ENCODE measurements at regions of chr1 and their contacts with region 1.

Region 1: DNA sequence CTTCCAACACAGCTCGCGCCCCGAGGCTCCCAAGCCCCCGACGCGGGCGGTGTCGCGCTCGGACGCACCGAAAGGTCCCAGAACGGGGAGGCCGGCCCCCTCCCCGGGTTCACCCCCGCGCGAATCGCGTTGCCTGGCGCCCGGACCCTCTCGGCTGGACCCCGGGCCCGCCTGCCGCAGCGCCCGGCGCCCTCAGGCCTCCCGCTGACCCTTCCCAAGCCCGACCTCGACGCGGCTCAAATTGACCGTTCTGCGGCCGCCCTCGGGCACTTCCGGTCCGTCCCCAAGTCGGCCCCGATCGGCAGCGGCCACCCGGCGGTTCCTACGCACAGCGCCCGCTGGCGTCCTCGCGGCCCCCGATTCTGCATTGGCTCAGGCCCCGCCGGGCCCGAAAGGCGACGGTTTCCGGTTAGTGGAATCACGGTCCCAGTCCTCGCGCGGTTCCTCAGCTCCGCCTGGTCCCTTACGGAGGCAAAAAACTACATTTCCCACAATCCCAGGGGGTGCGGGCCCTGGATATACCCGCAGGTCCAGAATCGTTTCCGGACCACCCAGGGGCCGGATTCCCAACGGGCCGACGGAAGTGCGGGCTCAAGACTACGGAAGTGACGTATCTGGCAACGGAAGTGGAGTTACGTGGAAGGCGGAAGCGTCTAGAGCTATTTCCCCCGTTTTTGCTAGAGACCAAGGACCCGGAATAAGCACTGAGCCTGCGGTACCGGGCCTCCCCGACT is at the start of gene AURKAIP1:
- DNase-seq: peak; percentile 88 to 100 (median 93)
- ATAC-seq: peak; percentile 66
- H3K4me3 ChIP-seq: peak within 1 kb of the TSS; percentile 84
- H3K4me3 Mint-ChIP-seq: peak within 1 kb of the TSS; percentile 99
- H3K27ac ChIP-seq: peak within 1 kb of the TSS; percentile 87 to 89
- H3K27ac Mint-ChIP-seq: peak within 1 kb of the TSS; percentile 91
- H3K4me1 ChIP-seq: peaks cover 54% of the 10 kb centered on the region
- H3K4me1 Mint-ChIP-seq: peaks cover 38% of the 10 kb centered on the region
- H3K27me3 ChIP-seq: no peaks in the 10 kb centered on the region
- H3K27me3 Mint-ChIP-seq: no peaks in the 10 kb centered on the region
- CTCF ChIP-seq: no peak
- total RNA-seq, gene AURKAIP1: 59.2 to 64.6 TPM

Region 2: GRCh38 chr1:1122078-1122811 is 252.9 kb before region 1 on chr1:
- CTCF ChIA-PET with region 1: interaction called, 4 read pairs
- POLR2A ChIA-PET with region 1: interaction called, 4 read pairs
- intact Hi-C with region 1: loop called in 1 of 2 experiments (anchors 1 kb)
- DNase-seq: peak; percentile 71 to 90 (median 82)
- ATAC-seq: peak; percentile 99
- H3K4me3 ChIP-seq: peak overlapping the region; percentile 48
- H3K4me3 Mint-ChIP-seq: no peak overlapping the region
- H3K27ac ChIP-seq: no peak overlapping the region
- H3K27ac Mint-ChIP-seq: no peak overlapping the region
- H3K4me1 ChIP-seq: peaks cover 20% of the 10 kb centered on the region
- H3K4me1 Mint-ChIP-seq: no peaks in the 10 kb centered on the region
- H3K27me3 ChIP-seq: peaks cover 0 to 2% of the 10 kb centered on the region in 2 experiments
- H3K27me3 Mint-ChIP-seq: no peaks in the 10 kb centered on the region
- CTCF ChIP-seq: peak; percentile 91

Region 3: DNA sequence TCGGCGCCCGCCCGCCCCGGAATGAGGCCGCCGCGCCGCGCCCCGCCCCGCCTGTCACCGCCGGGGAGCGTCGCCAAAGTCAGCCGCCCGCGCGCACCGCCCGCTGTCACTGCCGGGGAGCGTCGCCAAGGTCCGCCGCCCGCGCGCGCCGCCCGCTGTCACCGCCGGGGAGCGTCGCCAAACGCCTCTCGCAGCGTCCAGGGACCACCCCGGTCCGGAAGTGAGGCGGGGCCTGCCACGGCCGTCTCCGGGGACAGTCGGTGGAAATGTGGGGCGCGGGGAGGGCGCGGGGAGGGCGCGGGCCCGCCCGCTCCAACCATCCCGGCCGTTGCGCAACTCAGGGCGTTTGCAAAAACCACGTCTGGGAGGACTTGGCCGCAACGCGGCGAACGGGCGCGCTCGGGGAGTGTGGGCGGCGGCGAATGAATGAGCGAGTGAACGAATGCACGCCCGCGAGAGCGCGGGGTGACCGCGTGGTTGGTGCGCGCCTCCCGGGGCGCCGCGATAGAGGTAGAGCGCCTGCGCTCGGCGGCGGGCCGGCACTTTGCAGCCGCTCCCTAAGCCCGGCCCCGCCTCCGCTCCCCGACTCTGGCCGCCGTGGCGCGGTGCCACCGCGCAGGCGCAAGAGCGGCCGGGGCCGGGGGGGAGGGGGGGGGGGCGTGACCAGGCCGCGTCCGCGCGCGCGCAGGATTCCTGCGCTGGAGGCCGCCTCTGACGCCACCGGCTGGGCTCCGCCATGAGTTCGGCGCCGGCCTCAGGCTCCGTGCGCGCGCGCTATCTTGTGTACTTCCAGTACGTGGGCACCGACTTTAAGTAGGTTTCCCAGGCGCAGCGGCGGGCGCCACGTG is 67.0 kb before region 1 on chr1 and contains the starts of genes ACAP3 and PUSL1:
- CTCF ChIA-PET with region 1: no interaction called
- POLR2A ChIA-PET with region 1: interaction called, 5 read pairs
- intact Hi-C with region 1: loop called (anchors 1 to 10 kb)
- DNase-seq: peak; percentile 77 to 96 (median 86)
- ATAC-seq: peak; percentile 74
- H3K4me3 ChIP-seq: peak within 1 kb of the TSS; percentile 70
- H3K4me3 Mint-ChIP-seq: peak within 1 kb of the TSS; percentile 93
- H3K27ac ChIP-seq: peak within 1 kb of the TSS; percentile 76 to 88
- H3K27ac Mint-ChIP-seq: peak within 1 kb of the TSS; percentile 87
- H3K4me1 ChIP-seq: peaks cover 46% of the 10 kb centered on the region
- H3K4me1 Mint-ChIP-seq: peaks cover 25% of the 10 kb centered on the region
- H3K27me3 ChIP-seq: no peaks in the 10 kb centered on the region
- H3K27me3 Mint-ChIP-seq: no peaks in the 10 kb centered on the region
- CTCF ChIP-seq: no peak
- total RNA-seq, gene ACAP3: 45.3 to 46.4 TPM
- total RNA-seq, gene PUSL1: 18.1 to 19.2 TPM

Region 4: GRCh38 chr1:1355416-1355815 is 19.7 kb before region 1 on chr1:
- CTCF ChIA-PET with region 1: interaction called, 9 read pairs
- POLR2A ChIA-PET with region 1: interaction called, 12 read pairs
- intact Hi-C with region 1: loop called in 1 of 2 experiments (anchors 2 kb)
- DNase-seq: no peak
- ATAC-seq: no peak
- H3K4me3 ChIP-seq: no peak overlapping the region
- H3K4me3 Mint-ChIP-seq: no peak overlapping the region
- H3K27ac ChIP-seq: no peak overlapping the region
- H3K27ac Mint-ChIP-seq: no peak overlapping the region
- H3K4me1 ChIP-seq: peaks cover 54% of the 10 kb centered on the region
- H3K4me1 Mint-ChIP-seq: peaks cover 28% of the 10 kb centered on the region
- H3K27me3 ChIP-seq: peaks cover 37 to 50% of the 10 kb centered on the region in 2 experiments
- H3K27me3 Mint-ChIP-seq: peaks cover 41% of the 10 kb centered on the region
- CTCF ChIP-seq: no peak

Region 5: GRCh38 chr1:1406817-1407635 is 31.9 kb after region 1 on chr1 and contains the start of gene MRPL20:
- CTCF ChIA-PET with region 1: interaction called, 7 read pairs
- POLR2A ChIA-PET with region 1: interaction called, 39 read pairs
- intact Hi-C with region 1: loop called (anchors 1 to 2 kb)
- DNase-seq: peak; percentile 93 to 99 (median 95)
- ATAC-seq: peak; percentile 94
- H3K4me3 ChIP-seq: peak within 1 kb of the TSS; percentile 92
- H3K4me3 Mint-ChIP-seq: peak within 1 kb of the TSS; percentile 94
- H3K27ac ChIP-seq: peak within 1 kb of the TSS; percentile 80 to 88
- H3K27ac Mint-ChIP-seq: peak within 1 kb of the TSS; percentile 91
- H3K4me1 ChIP-seq: peaks cover 44% of the 10 kb centered on the region
- H3K4me1 Mint-ChIP-seq: peaks cover 34% of the 10 kb centered on the region
- H3K27me3 ChIP-seq: no peaks in the 10 kb centered on the region
- H3K27me3 Mint-ChIP-seq: no peaks in the 10 kb centered on the region
- CTCF ChIP-seq: no peak
- total RNA-seq, gene MRPL20: 99.9 to 103 TPM

Region 6: GRCh38 chr1:1430114-1430982 is 55.3 kb after region 1 on chr1:
- CTCF ChIA-PET with region 1: no interaction called
- POLR2A ChIA-PET with region 1: no interaction called
- intact Hi-C with region 1: no loop called
- DNase-seq: no peak
- ATAC-seq: no peak
- H3K4me3 ChIP-seq: no peak overlapping the region
- H3K4me3 Mint-ChIP-seq: no peak overlapping the region
- H3K27ac ChIP-seq: no peak overlapping the region
- H3K27ac Mint-ChIP-seq: no peak overlapping the region
- H3K4me1 ChIP-seq: peaks cover 12% of the 10 kb centered on the region
- H3K4me1 Mint-ChIP-seq: no peaks in the 10 kb centered on the region
- H3K27me3 ChIP-seq: peaks cover 44 to 53% of the 10 kb centered on the region in 2 experiments
- H3K27me3 Mint-ChIP-seq: peaks cover 33% of the 10 kb centered on the region
- CTCF ChIP-seq: no peak

Measured in CD4-positive, alpha-beta T cell (primary cell).